ENCODE measurements at regions of chr2 and their contacts with region 1.

Region 1: GRCh38 chr2:63834401-63834800 is 7.3 kb upstream of the UGP2 start:
- DNase-seq: no peak
- H3K4me3 ChIP-seq: no peak overlapping the region
- H3K27ac ChIP-seq: no peak overlapping the region
- H3K4me1 ChIP-seq: no peaks in the 10 kb centered on the region
- H3K27me3 ChIP-seq: no peaks in the 10 kb centered on the region
- CTCF ChIP-seq: no peak

Region 2: DNA sequence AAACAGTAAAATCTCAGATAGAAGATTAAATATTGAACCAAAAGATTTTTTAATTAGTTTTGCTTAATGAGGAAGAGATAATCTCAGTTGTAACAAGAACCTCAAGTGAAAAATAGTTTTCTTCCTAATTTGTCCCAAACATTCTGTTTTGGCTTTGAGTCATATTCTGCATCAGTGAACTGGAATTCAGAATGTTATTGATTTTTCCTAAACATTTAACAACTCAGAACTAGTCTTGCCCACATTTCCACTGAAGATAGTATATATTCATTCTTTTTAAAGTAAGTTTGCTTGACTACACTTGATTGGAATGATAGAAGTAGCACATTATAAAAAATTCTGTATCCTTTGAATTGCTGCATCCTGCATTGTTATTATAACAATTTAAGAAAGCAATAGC is 78.4 kb before region 1 on chr2:
- CTCF ChIA-PET with region 1: no interaction called
- dilution Hi-C with region 1: loop called (anchors 10 kb)
- in situ Hi-C with region 1: no loop called
- intact Hi-C with region 1: no loop called
- DNase-seq: peak; percentile 4
- H3K4me3 ChIP-seq: no peak overlapping the region
- H3K27ac ChIP-seq: no peak overlapping the region
- H3K4me1 ChIP-seq: no peaks in the 10 kb centered on the region
- H3K27me3 ChIP-seq: no peaks in the 10 kb centered on the region
- CTCF ChIP-seq: no peak

Region 3: DNA sequence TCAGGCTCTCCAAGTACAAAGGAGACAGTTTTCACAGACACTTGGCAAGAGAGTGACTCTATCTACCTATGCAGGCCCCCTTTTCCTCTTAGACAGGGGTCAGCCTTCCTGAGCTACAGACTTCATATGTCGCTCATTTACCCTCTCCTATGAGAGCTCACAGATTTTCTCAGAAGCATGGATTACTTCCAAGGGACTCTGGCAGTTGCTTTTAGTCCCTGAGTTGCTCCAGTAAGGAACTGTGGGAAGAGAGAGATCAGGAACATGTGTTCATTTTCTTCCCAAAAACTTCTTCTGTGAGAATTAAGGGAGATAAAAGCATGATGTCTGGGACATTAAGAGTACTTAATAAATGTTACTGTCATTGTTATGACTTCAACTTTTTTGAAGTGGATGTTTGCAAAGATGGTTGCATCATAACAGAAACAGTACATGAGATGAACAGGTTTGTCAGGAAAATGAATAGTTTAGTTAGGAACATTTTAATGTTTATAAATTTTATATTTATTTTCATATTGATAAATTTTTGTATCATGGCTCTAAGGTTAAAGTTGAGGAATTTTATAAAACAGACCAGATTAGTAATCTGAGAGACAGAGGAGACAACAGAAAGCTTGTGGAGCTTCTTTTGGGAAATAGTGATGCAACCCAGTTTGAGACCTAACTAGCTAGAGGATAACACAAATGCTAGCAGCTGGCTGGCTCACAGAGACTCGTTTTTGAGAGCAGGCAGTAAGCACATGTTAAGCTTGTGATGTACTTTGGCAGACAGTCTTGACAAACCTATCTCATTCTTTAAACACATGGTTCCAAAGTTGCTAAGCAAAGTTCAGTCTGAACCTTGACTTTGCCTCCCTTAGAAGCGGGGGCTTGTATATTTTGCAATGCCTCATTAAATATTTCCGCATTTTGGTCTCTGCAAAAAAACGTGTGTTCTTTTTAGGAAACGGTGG is 14.4 kb before region 1 on chr2:
- CTCF ChIA-PET with region 1: no interaction called
- dilution Hi-C with region 1: no loop called
- in situ Hi-C with region 1: no loop called
- intact Hi-C with region 1: no loop called
- DNase-seq: no peak
- H3K4me3 ChIP-seq: no peak overlapping the region
- H3K27ac ChIP-seq: no peak overlapping the region
- H3K4me1 ChIP-seq: no peaks in the 10 kb centered on the region
- H3K27me3 ChIP-seq: no peaks in the 10 kb centered on the region
- CTCF ChIP-seq: no peak

Measured in mammary epithelial cell (primary cell).